Activated CD4-positive, alpha-beta memory T cell treated with anti-CD3 and anti-CD28 coated beads for 36 hours (primary cell): ENCODE measurements at regions of chr20 and their contacts with region 1.

Region 1: DNA sequence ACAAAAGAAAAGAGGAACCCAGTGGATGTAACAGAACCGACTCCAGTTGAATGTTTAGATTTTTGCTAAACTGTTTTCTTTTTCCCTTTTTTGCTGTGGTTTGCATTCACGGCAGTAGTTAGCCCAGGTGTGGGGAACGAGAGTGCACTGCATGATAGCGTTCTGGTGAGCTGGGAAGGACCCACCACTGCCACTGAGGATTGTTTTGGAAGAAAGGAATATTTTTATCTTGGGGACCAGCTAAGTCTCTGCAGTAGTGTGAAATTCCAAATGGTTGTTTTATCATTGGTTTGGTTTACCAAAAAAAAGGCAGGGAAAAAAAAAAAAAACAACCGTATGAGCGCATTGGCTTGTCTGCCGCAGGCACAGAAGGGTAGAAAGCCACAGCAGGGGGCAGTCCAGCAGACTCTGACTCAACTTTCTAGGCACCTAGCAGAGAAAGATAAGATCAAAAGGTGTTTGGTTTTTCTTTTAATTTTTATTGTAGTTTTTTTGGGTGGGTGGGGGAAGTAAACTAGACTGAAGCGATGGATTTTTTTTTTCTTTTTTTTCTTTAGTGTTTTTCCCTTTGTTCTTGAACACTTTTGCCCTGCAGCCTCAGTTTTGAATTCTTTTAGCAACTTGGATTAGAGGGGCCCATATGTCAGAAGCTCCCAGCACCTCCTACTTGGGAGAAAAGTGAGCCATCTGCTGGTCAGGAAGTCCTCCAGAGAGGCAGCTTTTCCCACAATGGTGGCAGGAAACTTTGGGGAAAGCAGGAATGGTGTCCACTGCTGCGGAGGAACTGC is 13.5 kb upstream of the RAB5IF start:
- DNase-seq: peak; percentile 75
- H3K4me3 Mint-ChIP-seq: no peak overlapping the region
- H3K27ac Mint-ChIP-seq: peak overlapping the region; percentile 73
- H3K4me1 Mint-ChIP-seq: peaks cover 57% of the 10 kb centered on the region
- H3K27me3 Mint-ChIP-seq: no peaks in the 10 kb centered on the region

Region 2: DNA sequence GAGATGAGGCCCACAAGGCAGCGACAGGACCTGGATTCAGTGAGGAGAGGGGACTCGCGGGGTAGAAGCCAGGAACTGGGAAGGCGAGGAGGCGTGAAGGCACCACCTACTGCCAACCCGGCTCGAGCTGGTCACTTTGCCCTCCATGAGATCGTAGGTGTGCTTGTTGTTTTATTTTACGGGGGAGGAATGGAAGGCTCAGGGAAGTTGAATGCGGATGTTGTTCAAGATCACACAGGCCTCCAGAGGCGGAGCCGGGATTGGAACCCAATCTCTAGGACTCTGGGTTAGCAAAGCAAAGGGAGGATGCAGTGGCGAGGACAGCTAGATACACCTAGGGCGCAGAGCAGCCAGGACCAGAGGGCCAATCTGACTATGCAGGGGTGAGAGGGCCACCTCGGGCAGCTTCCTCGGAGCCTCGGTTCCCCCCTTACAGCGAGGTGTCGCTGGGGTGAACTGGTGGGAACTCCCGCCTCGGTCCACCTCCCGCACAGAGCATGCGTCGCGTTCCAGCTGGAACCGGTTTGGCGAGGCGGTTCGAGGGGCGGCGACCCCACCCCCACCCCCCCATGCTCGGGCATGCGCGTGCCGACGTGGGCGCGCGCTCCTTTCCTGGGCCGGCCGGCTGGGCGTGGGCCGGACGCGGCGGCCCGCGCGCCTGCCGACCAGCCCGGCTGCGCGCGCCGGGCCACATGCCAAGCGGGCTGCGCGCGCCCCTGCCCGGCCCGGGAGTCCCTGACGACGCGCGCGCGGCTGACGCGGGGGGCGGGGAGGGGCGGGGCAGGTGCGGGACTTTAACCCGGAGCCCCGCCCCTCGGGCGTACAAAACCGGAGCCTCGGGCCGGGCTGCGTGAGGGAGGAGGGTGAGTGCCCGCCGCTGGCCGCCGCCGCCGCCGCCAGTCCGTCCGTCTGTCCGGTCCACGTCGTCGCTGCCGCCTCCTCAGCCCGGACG is 131.1 kb before region 1 on chr20:
- CTCF ChIA-PET with region 1: no interaction called
- POLR2A ChIA-PET with region 1: interaction called, 6 read pairs
- intact Hi-C with region 1: loop called (anchors 2 kb)
- DNase-seq: peak; percentile 91
- H3K4me3 Mint-ChIP-seq: peak overlapping the region; percentile 65
- H3K27ac Mint-ChIP-seq: peak overlapping the region; percentile 83
- H3K4me1 Mint-ChIP-seq: peaks cover 46% of the 10 kb centered on the region
- H3K27me3 Mint-ChIP-seq: no peaks in the 10 kb centered on the region

Region 3: DNA sequence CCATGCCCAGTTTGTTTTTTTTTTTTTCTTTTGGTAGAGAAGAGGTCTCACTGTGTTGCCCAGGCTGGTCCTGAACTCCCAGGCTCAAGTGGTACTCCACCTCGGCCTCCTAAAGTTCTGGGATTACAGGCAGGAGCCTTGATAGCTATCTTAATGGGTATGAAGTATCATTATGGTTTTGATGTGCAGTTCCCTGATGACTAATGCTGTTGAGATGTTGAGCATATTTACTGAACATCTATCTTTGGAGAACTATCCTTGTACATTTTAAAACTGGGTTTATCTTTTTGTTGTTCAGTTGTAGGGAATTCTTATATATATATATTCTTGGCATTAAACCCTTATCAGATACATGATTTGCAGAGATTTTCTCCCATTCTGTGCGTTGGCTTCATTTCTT is 72.1 kb before region 1 on chr20:
- CTCF ChIA-PET with region 1: no interaction called
- POLR2A ChIA-PET with region 1: no interaction called
- intact Hi-C with region 1: loop called (anchors 1 kb)
- DNase-seq: no peak
- H3K4me3 Mint-ChIP-seq: no peak overlapping the region
- H3K27ac Mint-ChIP-seq: peak overlapping the region; percentile 73
- H3K4me1 Mint-ChIP-seq: peaks cover 14% of the 10 kb centered on the region
- H3K27me3 Mint-ChIP-seq: no peaks in the 10 kb centered on the region

Region 4: GRCh38 chr20:36550797-36551299 is 41.2 kb before region 1 on chr20:
- CTCF ChIA-PET with region 1: no interaction called
- POLR2A ChIA-PET with region 1: interaction called, 3 read pairs
- intact Hi-C with region 1: loop called (anchors 2 kb)
- DNase-seq: no peak
- H3K4me3 Mint-ChIP-seq: no peak overlapping the region
- H3K27ac Mint-ChIP-seq: no peak overlapping the region
- H3K4me1 Mint-ChIP-seq: no peaks in the 10 kb centered on the region
- H3K27me3 Mint-ChIP-seq: no peaks in the 10 kb centered on the region

Region 5: DNA sequence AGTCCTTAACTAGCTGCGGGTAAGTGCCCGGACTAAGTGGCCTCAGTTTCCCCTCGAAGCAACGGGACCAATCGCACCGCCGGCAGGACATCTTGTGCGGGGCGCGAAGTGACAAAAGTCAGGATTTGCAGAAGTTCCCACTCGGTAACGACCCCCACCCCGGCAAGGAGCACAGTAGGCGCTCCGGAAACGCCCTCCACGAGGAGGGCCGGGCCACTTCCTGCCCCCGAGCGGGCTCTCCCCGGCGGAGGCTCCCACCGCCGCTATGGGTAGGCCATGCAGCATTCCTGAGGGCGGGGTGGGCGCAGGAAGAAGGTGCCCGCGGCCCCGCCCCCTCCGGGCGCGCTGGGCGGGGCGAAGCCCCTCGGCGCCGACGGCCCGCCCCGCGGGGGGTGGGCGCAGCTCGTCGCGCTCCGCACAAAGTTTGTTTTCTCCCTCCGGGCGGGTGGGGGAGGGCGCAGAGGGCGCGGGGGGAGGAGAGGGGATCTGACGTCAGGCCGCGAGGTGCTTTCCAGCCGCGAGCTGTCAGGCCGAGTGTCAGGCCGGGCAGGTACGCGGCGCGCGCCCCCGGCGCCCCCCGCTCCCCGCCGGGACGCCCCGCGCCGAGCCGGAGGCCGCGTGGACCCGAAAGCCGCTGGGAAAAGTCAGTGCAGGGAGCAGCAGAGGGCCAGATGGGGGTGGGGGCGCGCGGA is 18.8 kb before region 1 on chr20 and contains the start of gene TGIF2:
- CTCF ChIA-PET with region 1: interaction called, 12 read pairs
- POLR2A ChIA-PET with region 1: interaction called, 13 read pairs
- intact Hi-C with region 1: loop called (anchors 1 kb)
- DNase-seq: peak; percentile 94
- H3K4me3 Mint-ChIP-seq: peak within 1 kb of the TSS; percentile 87
- H3K27ac Mint-ChIP-seq: peak within 1 kb of the TSS; percentile 92
- H3K4me1 Mint-ChIP-seq: peaks cover 33% of the 10 kb centered on the region
- H3K27me3 Mint-ChIP-seq: no peaks in the 10 kb centered on the region
- total RNA-seq, gene TGIF2: 39.7 to 43.0 TPM

Region 6: GRCh38 chr20:36605399-36606157 is 13.5 kb after region 1 on chr20 and contains the start of gene RAB5IF:
- CTCF ChIA-PET with region 1: interaction called, 100 read pairs
- POLR2A ChIA-PET with region 1: interaction called, 47 read pairs
- intact Hi-C with region 1: loop called (anchors 1 kb)
- DNase-seq: peak; percentile 100
- H3K4me3 Mint-ChIP-seq: peak within 1 kb of the TSS; percentile 99
- H3K27ac Mint-ChIP-seq: peak within 1 kb of the TSS; percentile 97
- H3K4me1 Mint-ChIP-seq: peaks cover 28% of the 10 kb centered on the region
- H3K27me3 Mint-ChIP-seq: no peaks in the 10 kb centered on the region
- total RNA-seq, gene RAB5IF: 113 to 114 TPM

Region 7: DNA sequence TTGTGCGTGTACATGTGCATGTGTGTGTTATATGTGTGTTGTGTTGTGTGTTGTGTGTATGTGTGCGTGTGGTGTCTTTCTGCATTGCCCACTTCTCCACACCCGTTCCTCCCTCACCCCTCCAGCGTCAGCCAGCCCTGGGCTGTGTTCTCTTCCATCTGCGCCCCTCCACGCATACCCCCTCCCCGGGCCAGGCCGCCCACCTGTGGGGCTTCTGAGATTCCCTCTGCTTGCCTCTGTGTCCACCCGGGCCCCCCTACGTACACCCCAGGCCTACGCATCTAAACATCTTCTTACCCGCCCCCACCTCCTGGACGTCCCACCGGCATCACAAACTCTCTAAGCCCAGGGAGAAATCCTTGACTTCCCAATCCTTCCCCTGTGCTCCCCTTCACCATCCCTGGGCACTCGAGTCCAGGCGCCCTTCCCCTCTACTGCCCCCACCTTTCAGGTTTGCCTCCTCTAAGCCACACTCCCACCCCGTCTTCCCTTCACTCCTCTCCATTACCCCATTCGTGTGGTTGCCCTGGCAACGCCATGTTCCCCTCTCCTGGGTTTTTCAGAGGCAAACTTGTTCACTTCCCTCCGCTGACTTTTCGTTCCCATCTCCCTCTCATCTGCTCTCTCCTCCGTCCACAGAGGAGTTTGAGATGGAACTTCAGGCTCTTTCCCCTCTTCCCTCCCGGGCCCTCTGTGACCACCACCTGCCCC is 847.3 kb after region 1 on chr20:
- CTCF ChIA-PET with region 1: no interaction called
- POLR2A ChIA-PET with region 1: no interaction called
- intact Hi-C with region 1: no loop called
- DNase-seq: no peak
- H3K4me3 Mint-ChIP-seq: no peak overlapping the region
- H3K27ac Mint-ChIP-seq: no peak overlapping the region
- H3K4me1 Mint-ChIP-seq: no peaks in the 10 kb centered on the region
- H3K27me3 Mint-ChIP-seq: no peaks in the 10 kb centered on the region